ENCODE measurements at regions of chr11 and their contacts with region 1.

Region 1: GRCh38 chr11:64317957-64318693 is at the start of gene PRDX5:
- DNase-seq: peak; percentile 97
- H3K4me3 Mint-ChIP-seq: peak within 1 kb of the TSS; percentile 92
- H3K27ac Mint-ChIP-seq: peak within 1 kb of the TSS; percentile 99
- H3K4me1 Mint-ChIP-seq: peaks cover 28% of the 10 kb centered on the region
- H3K27me3 Mint-ChIP-seq: no peaks in the 10 kb centered on the region
- total RNA-seq, gene PRDX5: 156 to 164 TPM

Region 2: GRCh38 chr11:64246871-64247728 is 71.0 kb before region 1 on chr11 and contains the start of gene PPP1R14B:
- CTCF ChIA-PET with region 1: interaction called, 7 read pairs
- POLR2A ChIA-PET with region 1: interaction called, 13 read pairs
- intact Hi-C with region 1: no loop called
- DNase-seq: peak; percentile 88
- H3K4me3 Mint-ChIP-seq: peak within 1 kb of the TSS; percentile 91
- H3K27ac Mint-ChIP-seq: peak within 1 kb of the TSS; percentile 90
- H3K4me1 Mint-ChIP-seq: peaks cover 36% of the 10 kb centered on the region
- H3K27me3 Mint-ChIP-seq: no peaks in the 10 kb centered on the region
- total RNA-seq, gene PPP1R14B: 238 to 242 TPM

Region 3: GRCh38 chr11:64331557-64332371 is 13.6 kb after region 1 on chr11:
- CTCF ChIA-PET with region 1: interaction called, 97 read pairs
- POLR2A ChIA-PET with region 1: interaction called, 20 read pairs
- intact Hi-C with region 1: loop called (anchors 1 kb)
- DNase-seq: peak; percentile 90
- H3K4me3 Mint-ChIP-seq: no peak overlapping the region
- H3K27ac Mint-ChIP-seq: peak overlapping the region; percentile 47
- H3K4me1 Mint-ChIP-seq: peaks cover 18% of the 10 kb centered on the region
- H3K27me3 Mint-ChIP-seq: no peaks in the 10 kb centered on the region

Region 4: GRCh38 chr11:64358907-64359711 is 41.0 kb after region 1 on chr11 and contains the start of gene RPS6KA4:
- CTCF ChIA-PET with region 1: interaction called, 8 read pairs
- POLR2A ChIA-PET with region 1: interaction called, 10 read pairs
- intact Hi-C with region 1: no loop called
- DNase-seq: peak; percentile 68
- H3K4me3 Mint-ChIP-seq: peak within 1 kb of the TSS; percentile 91
- H3K27ac Mint-ChIP-seq: peak within 1 kb of the TSS; percentile 58
- H3K4me1 Mint-ChIP-seq: peaks cover 37% of the 10 kb centered on the region
- H3K27me3 Mint-ChIP-seq: no peaks in the 10 kb centered on the region
- total RNA-seq, gene RPS6KA4: 31.4 to 34.3 TPM

Measured in activated CD4-positive, alpha-beta memory T cell treated with anti-CD3 and anti-CD28 coated beads for 36 hours (primary cell).